Lower leg skin (tissue), 4 donors: ENCODE measurements at regions of chr10 and their contacts with region 1.

Region 1: GRCh38 chr10:69344591-69345252 is 66.4 kb downstream of the HK1 start:
- DNase-seq: no peak
- H3K4me3 ChIP-seq: no peak overlapping the region
- CTCF ChIP-seq: no peak
- POLR2A ChIP-seq: no peak

Region 2: DNA sequence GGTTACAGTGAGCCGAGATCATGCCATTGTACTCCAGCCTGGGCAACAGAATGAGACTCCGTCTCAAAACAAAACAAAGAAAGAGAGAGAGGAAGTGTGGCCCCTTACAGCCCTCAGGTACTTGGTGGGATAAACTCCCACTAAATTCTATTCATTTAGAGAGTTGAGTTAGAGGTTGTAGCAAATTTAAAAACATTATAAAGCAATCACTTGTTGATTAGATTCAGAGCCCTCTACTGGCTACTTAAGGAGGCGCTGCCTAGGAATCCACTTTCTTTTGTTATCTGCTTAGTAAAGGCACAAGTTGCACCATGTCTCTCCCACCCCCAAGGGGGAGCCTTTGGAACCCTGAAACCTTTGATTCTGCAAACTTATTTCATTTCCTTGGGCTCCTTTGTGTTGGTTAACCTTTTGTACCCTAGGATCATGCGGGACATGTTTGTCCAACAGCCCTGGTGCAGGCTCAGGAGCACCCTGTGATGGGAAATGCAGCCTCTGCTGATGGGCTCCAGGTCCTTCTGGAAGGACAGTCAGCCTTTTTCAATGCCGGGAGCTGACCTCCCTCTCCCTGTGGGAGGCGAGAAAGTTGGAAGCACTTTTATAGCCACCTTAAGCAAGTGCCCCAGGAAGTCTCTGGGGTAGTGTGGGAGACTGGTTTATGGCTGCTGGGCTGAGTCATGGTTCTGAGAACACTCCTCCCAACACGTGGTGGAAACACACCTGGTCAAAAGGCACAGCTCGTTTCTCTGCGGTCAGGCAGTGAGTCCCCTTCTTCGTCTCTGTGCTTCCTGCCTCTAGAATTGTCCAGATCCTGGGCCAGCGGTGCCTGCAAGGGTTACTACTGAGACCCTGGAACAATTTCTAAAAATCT is 122.3 kb before region 1 on chr10:
- intact Hi-C with region 1: no loop called
- DNase-seq: peak in 1 of 2 donors; percentile 40
- H3K4me3 ChIP-seq: no peak overlapping the region
- CTCF ChIP-seq: no peak
- POLR2A ChIP-seq: no peak

Region 3: DNA sequence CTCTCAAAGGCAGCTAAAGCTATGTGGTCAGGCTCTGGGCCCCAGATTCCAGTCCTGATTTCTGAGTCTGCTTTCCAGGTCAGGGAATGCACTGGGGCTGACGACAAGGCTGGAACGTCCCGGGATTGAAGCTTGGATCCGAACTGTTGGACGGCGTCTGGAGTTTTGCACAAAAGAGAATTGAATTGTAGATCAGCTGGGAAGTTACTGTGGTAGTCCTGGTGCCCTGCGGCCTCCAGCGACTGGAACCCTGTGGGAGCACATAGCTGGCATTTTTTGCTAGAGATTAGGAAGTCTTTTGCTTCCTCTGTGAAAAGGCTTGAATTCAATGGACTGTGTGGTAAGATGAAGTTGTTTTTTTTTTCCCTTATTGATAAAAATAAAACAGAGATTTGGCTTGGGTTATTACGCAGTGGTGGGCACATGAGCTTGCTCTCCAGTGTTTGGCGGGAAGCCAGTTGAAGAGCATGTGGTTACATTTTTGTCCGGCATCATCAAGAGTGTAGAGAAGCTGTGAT is 66.2 kb before region 1 on chr10 and contains the start of gene HK1:
- intact Hi-C with region 1: no loop called
- DNase-seq: peak in 1 of 2 donors; percentile 59
- H3K4me3 ChIP-seq: no peak within 1 kb of the TSS
- CTCF ChIP-seq: no peak
- POLR2A ChIP-seq: no peak
- total RNA-seq, gene HK1: 117 to 162 (median 158) TPM

Region 4: GRCh38 chr10:69290993-69291392 is 53.7 kb before region 1 on chr10:
- intact Hi-C with region 1: loop called (anchors 2 kb)
- DNase-seq: no peak
- H3K4me3 ChIP-seq: no peak overlapping the region
- CTCF ChIP-seq: no peak
- POLR2A ChIP-seq: no peak

Region 5: GRCh38 chr10:69392481-69393000 is 47.8 kb after region 1 on chr10:
- intact Hi-C with region 1: no loop called
- DNase-seq: peak; percentile 90 to 97
- H3K4me3 ChIP-seq: no peak overlapping the region
- CTCF ChIP-seq: peak in 1 of 3 donors; percentile 94
- POLR2A ChIP-seq: no peak